Left ventricle myocardium superior (tissue), 1 donor: ENCODE measurements at regions of chr9 and their contacts with region 1.

Region 1: GRCh38 chr9:104863180-104863883 is 64.6 kb downstream of the ABCA1 start:
- DNase-seq: no peak
- ATAC-seq: peak; percentile 74

Region 2: DNA sequence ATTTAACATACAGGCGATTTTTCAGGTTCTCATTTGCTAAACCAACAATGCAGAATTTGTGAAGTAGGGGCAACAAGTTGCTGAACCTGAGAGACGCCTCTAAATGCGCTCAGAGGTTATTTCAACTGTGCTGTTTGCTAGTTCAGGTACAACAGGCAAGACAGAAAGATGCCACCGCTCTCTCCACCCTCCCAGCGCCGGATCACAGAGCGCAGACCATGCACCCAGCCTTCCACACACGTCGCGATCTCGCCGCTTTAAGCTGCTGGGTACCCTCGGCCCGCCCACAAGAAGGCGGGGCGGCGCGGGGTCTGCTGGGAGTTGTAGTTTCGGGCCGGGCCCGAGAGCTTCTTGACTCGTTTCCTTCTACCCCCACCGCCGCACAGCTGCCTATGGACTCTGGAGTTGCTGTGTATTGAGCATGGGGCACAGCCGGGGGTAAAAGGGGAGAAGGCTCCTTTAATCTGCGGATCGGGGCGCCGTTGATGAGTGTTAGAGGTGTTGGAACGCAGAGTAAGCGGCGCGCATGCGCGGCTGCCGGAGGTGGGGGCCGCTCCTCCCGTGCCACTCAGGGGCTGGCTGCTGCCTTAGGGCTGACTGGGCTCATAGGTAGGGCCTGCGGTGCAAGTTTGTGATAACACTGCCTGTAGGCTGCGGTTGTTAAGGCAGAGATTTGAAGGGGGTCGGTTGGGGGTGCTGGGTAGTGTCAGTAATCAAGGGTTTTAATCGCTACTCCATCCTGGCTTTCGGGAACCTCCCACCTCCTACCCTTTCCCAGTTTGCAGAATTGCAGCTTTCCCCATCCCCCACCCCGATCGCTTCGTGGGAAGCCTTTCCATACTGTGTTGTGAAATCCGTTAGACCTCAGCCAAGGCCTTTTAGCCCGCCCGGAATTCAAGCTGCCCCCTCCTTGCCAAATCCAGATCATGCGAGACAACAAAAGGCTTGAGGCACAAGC is 105.0 kb after region 1 on chr9:
- intact Hi-C with region 1: loop called (anchors 10 kb)
- DNase-seq: peak; percentile 95
- ATAC-seq: peak; percentile 95

Region 3: DNA sequence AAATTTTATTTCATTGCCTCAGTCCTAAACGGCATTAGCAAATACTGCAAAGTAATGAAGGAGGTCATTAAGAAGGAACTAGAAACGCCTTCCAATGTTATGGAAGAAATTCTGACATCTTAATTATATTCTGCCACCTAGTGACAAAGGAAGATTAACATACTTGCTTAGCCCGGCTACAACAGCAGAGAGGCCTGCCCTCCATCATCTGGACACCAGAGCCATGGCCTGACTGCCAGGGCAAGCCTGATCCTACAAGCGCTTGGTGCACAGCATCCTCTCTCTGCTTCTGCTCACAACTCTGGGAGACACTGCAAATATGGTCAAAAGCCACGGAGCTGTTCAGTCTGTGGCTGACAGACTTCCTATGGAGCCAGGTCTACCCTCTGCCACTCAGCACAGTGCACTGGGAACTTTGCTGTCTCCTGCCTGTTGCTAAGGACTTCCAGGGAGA is 293.8 kb after region 1 on chr9:
- intact Hi-C with region 1: loop called (anchors 5 kb)
- DNase-seq: peak; percentile 65
- ATAC-seq: peak; percentile 92

Region 4: DNA sequence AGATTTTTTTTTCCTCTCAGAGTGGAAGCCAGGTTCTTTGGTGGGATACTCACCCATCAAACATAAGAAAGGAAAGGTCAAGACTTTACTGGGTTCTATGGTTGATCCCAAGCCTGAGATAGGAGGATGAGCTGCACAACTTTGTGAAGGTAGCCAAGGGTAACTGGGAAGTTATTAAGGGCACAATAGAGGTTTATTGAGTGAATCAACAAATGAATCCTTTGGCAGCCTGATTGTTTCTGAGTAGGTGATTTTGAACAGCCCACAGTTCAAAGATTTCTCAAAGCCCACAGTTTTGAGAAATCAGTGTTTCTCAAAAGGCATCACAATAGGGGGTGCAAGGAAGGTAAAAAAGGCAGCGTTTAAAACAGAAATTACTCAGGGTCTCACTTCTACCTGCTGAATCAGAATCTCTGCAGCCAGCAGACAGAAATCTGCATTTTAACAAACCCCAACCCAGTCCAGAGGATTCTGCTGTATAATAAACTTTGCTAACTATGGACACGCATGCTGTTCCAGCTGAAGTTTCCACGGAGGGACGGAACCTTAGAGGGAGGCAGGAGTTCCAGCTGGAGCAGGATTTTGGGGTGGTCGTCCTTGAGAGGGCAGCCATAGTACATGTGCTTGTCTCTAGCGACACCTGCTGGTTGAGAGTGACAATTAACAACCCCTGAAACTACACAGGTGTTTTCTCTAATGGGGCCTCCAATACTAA is 551.8 kb after region 1 on chr9:
- intact Hi-C with region 1: loop called (anchors 10 kb)
- DNase-seq: no peak
- ATAC-seq: peak; percentile 74